ENCODE measurements at regions of chr6 and their contacts with region 1.

Region 1: GRCh38 chr6:78157606-78158005 is 504.8 kb downstream of the MEI4 start:
- DNase-seq: no peak
- H3K4me3 ChIP-seq: no peak overlapping the region
- H3K27ac ChIP-seq: no peak overlapping the region
- H3K4me1 ChIP-seq: no peaks in the 10 kb centered on the region
- H3K27me3 ChIP-seq: no peaks in the 10 kb centered on the region
- CTCF ChIP-seq: no peak
- POLR2A ChIP-seq: no peak

Region 2: GRCh38 chr6:78025501-78025900 is 132.1 kb before region 1 on chr6:
- intact Hi-C with region 1: no loop called
- DNase-seq: no peak
- H3K4me3 ChIP-seq: no peak overlapping the region
- H3K27ac ChIP-seq: no peak overlapping the region
- H3K4me1 ChIP-seq: no peaks in the 10 kb centered on the region
- H3K27me3 ChIP-seq: no peaks in the 10 kb centered on the region
- CTCF ChIP-seq: no peak
- POLR2A ChIP-seq: no peak

Region 3: GRCh38 chr6:78132671-78133410 is 24.8 kb before region 1 on chr6:
- intact Hi-C with region 1: no loop called
- DNase-seq: no peak
- H3K4me3 ChIP-seq: no peak overlapping the region
- H3K27ac ChIP-seq: no peak overlapping the region
- H3K4me1 ChIP-seq: no peaks in the 10 kb centered on the region
- H3K27me3 ChIP-seq: no peaks in the 10 kb centered on the region
- CTCF ChIP-seq: no peak
- POLR2A ChIP-seq: no peak

Region 4: GRCh38 chr6:78347191-78347916 is 189.7 kb after region 1 on chr6:
- intact Hi-C with region 1: no loop called
- DNase-seq: no peak
- H3K4me3 ChIP-seq: no peak overlapping the region
- H3K27ac ChIP-seq: no peak overlapping the region
- H3K4me1 ChIP-seq: no peaks in the 10 kb centered on the region
- H3K27me3 ChIP-seq: no peaks in the 10 kb centered on the region
- CTCF ChIP-seq: no peak
- POLR2A ChIP-seq: no peak

Region 5: DNA sequence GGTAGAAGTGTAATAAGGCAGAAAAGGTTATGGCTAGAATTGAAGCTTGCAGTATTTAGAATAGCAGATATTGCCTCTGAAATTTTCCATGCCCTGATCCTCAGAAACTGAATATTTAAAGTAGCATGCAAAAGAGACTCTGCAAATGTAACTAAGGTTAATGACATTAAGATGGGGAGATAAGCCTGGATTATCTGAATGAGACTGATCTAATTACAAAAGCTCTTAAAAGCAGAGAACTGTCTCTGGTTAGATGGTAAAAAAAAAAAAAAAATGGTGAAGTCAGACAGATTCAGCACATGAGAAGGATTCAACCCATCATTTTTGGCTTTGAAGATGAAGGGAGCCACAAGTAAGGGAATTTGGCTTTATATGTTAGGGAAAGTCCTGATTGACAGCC is 206.1 kb after region 1 on chr6:
- intact Hi-C with region 1: loop called (anchors 5 kb)
- DNase-seq: no peak
- H3K4me3 ChIP-seq: no peak overlapping the region
- H3K27ac ChIP-seq: no peak overlapping the region
- H3K4me1 ChIP-seq: no peaks in the 10 kb centered on the region
- H3K27me3 ChIP-seq: no peaks in the 10 kb centered on the region
- CTCF ChIP-seq: no peak
- POLR2A ChIP-seq: no peak